Mammary epithelial cell (primary cell): ENCODE measurements at regions of chr9 and their contacts with region 1.

Region 1: GRCh38 chr9:80867731-80868130 is 821.6 kb downstream of the TLE1 start:
- DNase-seq: peak; percentile 83
- H3K4me3 ChIP-seq: no peak overlapping the region
- H3K27ac ChIP-seq: peak overlapping the region; percentile 43
- H3K4me1 ChIP-seq: peaks cover 8% of the 10 kb centered on the region
- H3K27me3 ChIP-seq: no peaks in the 10 kb centered on the region
- CTCF ChIP-seq: no peak

Region 2: DNA sequence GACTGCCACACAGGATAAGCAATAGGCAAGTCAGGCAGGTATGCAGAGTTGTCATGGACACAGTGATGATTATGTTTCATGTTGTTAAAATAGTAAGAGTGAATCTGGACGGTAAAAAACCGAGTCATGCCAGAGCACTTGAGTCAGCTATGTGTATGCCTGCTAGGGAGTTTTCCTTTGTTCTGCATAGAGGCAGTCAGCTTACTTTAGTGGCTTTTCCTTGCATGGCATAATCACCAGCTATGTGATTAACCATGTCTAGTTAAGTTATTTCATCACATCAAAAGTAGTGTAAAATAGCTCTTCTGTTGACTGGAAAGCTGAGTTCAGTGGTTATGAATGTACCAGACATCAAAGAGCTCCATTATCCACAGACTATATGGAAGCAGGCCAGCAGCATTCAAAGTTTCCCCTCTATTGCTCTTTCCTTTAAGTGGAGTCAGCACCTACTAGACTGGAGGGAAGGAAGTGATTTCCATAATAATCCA is 168.2 kb before region 1 on chr9:
- CTCF ChIA-PET with region 1: no interaction called
- dilution Hi-C with region 1: no loop called
- in situ Hi-C with region 1: no loop called
- intact Hi-C with region 1: loop called (anchors 10 kb)
- DNase-seq: peak; percentile 99
- H3K4me3 ChIP-seq: no peak overlapping the region
- H3K27ac ChIP-seq: peak overlapping the region; percentile 83
- H3K4me1 ChIP-seq: peaks cover 13% of the 10 kb centered on the region
- H3K27me3 ChIP-seq: no peaks in the 10 kb centered on the region
- CTCF ChIP-seq: no peak

Region 3: DNA sequence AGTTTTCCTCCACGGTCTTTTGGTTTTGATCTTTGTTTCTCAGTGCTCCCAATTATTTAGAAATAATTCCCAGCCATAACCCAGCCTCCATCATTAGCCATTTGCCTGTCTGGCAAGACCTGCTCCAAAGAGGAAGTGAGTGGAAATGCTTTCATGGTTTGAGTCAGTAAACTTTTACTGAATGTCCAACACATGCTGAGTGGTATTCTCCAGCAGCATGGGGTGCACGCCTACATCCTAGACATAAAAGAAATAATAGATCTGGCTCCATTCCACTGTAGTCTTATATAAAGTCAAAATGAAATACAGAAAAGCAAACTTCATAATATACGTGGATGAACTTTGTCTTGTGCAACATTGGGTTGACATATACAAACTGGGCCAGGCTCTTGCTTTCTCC is 64.5 kb after region 1 on chr9:
- CTCF ChIA-PET with region 1: no interaction called
- dilution Hi-C with region 1: no loop called
- in situ Hi-C with region 1: no loop called
- intact Hi-C with region 1: no loop called
- DNase-seq: no peak
- H3K4me3 ChIP-seq: no peak overlapping the region
- H3K27ac ChIP-seq: no peak overlapping the region
- H3K4me1 ChIP-seq: no peaks in the 10 kb centered on the region
- H3K27me3 ChIP-seq: peaks cover 2% of the 10 kb centered on the region
- CTCF ChIP-seq: no peak